Spleen (tissue), 13 donors: ENCODE measurements at regions of chr15 and their contacts with region 1.

Region 1: GRCh38 chr15:65032801-65033537 is 3.5 kb upstream of the MTFMT start:
- DNase-seq: peak; percentile 81
- H3K4me3 ChIP-seq: no peak overlapping the region
- H3K27ac ChIP-seq: no peak overlapping the region
- H3K4me1 ChIP-seq: peaks cover 6 to 34% (median 24%) of the 10 kb centered on the region in 6 donors
- H3K27me3 ChIP-seq: no peaks in the 10 kb centered on the region
- CTCF ChIP-seq: peak; percentile 42 to 75 (median 62)
- POLR2A ChIP-seq: no peak

Region 2: DNA sequence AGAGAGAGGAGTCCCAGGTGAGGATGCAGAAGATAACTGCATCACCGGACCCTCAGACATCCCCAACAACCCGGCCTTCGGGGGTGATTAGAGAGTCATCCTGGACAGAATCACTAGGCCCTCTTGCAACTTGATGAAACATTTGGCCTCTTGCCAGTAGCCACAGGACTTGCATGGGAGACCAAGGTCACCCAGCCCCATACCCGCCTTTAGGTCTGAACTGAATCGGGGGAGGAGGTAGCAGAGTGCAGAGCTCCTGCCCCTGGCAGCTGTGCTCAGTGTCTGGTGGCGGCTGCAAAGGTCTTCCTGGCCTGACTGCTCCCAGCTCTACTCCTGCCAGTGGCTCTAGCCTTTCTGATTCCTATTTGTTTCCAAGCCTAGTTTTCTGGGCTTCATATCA is 219.9 kb before region 1 on chr15:
- intact Hi-C with region 1: no loop called
- DNase-seq: no peak
- H3K4me3 ChIP-seq: no peak overlapping the region
- H3K27ac ChIP-seq: no peak overlapping the region
- H3K4me1 ChIP-seq: peaks cover 0 to 17% (median 6%) of the 10 kb centered on the region in 6 donors
- H3K27me3 ChIP-seq: no peaks in the 10 kb centered on the region
- CTCF ChIP-seq: no peak
- POLR2A ChIP-seq: no peak

Region 3: GRCh38 chr15:64961013-64961412 is 72.0 kb before region 1 on chr15:
- intact Hi-C with region 1: no loop called
- DNase-seq: no peak
- H3K4me3 ChIP-seq: no peak overlapping the region
- H3K27ac ChIP-seq: no peak overlapping the region
- H3K4me1 ChIP-seq: no peaks in the 10 kb centered on the region
- H3K27me3 ChIP-seq: no peaks in the 10 kb centered on the region
- CTCF ChIP-seq: no peak
- POLR2A ChIP-seq: no peak

Region 4: DNA sequence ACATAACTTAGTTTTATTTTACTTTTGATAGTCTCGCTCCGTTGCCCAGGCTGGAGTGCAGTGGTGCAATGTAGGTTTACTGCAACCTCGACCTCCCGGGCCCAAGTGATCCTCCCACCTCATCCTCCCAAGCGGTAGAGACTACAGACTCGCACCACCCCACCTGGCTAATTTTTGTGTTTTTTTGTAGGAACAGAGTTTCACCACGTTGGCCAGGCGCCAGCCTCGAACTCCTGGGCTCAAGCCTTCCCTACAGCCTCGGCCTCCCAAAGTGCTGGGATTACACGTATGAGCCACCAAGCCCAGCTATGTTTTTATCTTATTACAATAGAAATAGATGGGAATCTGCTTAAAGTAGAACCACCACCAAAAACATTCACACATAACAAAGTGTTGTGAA is 265.8 kb after region 1 on chr15:
- intact Hi-C with region 1: loop called (anchors 5 kb)
- DNase-seq: no peak
- H3K4me3 ChIP-seq: peak overlapping the region in 1 of 8 donors; percentile 60
- H3K27ac ChIP-seq: peak overlapping the region in 1 of 8 donors; percentile 33
- H3K4me1 ChIP-seq: peaks cover 15 to 67% (median 35%) of the 10 kb centered on the region in 6 donors
- H3K27me3 ChIP-seq: no peaks in the 10 kb centered on the region
- CTCF ChIP-seq: no peak
- POLR2A ChIP-seq: no peak